Activated T-helper 1 cell treated with anti-CD3 and anti-CD28 coated beads, Interleukin-12 subunit alpha, Interleukin-12 subunit beta, Interleukin-2, Interleukin-4 antibody, amounts not matched to agents 30 ng/mL and 10 ng/mL and 1 ng/mL, durations not matched to agents 14 hours and 24 hours and 36 hours (primary cell): ENCODE measurements at regions of chr1 and their contacts with region 1.

Region 1: DNA sequence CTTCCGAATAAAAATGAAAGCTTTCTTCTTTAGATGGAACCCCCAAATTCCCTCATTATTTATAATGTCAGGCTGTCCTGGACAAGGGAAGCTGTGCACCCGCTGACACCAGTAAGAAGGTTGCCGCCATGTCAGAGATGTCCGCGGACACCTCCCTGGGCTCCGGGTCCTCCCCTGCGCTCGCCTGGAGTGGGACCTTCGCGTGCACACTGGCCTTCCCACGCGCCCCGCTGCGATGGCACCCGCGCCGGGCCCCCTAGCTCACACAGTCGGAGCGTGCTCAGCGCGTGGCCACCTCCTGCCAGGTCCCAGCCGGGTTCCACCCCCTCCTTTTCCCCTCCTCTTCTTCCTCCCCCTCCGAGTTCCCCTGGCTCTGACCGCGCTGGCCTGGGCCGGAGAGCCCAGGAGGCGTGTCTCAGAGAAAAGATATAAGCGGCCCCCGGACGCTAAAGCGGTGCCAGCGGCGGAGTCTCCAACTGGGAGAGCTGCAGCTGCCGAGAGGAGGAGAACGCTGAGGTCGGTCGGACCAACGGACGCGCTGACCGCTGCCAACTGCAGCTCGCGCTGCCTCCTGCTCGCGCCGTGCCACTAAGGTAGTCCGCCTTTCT is at the start of gene G0S2:
- DNase-seq: peak; percentile 59
- H3K4me3 Mint-ChIP-seq: peak within 1 kb of the TSS; percentile 92
- H3K27ac Mint-ChIP-seq: peak within 1 kb of the TSS; percentile 94
- H3K4me1 Mint-ChIP-seq: peaks cover 87% of the 10 kb centered on the region
- H3K27me3 Mint-ChIP-seq: peaks cover 2% of the 10 kb centered on the region
- total RNA-seq, gene G0S2: 501 and 509 TPM in 2 replicates

Region 2: DNA sequence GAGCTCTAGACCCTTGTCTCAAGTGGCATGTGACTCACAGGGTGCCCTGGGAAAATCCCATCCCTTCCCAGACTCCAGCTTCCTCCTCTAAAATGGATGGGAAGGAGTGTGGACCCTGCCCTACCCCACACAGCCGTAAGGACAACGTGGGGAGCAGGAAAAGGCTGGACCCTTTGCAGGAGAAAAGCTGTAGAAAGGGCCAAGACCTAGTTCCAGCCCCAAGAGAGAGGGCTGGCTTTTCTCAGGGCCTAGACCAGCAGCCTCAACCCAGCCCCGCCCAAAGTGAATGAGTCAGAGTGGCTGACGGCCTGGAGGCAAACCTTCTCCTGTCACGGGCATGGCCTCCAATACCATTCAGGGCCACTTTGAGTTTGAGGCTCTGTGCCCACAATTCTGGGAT is 23.9 kb before region 1 on chr1:
- intact Hi-C with region 1: loop called (anchors 1 kb)
- DNase-seq: peak; percentile 70
- H3K4me3 Mint-ChIP-seq: peak overlapping the region; percentile 58
- H3K27ac Mint-ChIP-seq: peak overlapping the region; percentile 96
- H3K4me1 Mint-ChIP-seq: peaks cover 76% of the 10 kb centered on the region
- H3K27me3 Mint-ChIP-seq: no peaks in the 10 kb centered on the region

Region 3: DNA sequence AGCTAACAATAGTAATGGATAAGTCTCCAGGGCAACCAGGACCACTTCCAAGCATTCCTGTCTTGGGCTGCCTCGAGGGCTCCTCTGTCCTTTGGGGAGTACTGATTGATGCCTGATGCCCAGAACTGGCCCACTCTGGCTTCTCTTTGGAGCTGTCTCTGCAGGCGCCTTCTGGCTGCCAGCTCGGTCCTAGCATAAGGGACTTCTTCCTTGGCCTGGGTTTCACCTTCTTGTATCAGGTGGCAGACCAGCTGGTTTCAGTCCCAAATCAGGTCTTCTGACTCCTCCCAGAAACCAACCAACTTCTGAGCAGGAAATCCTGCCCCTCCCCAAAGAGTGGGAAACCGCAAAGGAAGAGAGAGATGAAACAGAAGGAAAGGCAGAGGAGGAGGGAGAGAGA is 10.8 kb after region 1 on chr1:
- intact Hi-C with region 1: loop called (anchors 2 kb)
- DNase-seq: peak; percentile 58
- H3K4me3 Mint-ChIP-seq: peak overlapping the region; percentile 74
- H3K27ac Mint-ChIP-seq: peak overlapping the region; percentile 82
- H3K4me1 Mint-ChIP-seq: peaks cover 45% of the 10 kb centered on the region
- H3K27me3 Mint-ChIP-seq: no peaks in the 10 kb centered on the region

Region 4: DNA sequence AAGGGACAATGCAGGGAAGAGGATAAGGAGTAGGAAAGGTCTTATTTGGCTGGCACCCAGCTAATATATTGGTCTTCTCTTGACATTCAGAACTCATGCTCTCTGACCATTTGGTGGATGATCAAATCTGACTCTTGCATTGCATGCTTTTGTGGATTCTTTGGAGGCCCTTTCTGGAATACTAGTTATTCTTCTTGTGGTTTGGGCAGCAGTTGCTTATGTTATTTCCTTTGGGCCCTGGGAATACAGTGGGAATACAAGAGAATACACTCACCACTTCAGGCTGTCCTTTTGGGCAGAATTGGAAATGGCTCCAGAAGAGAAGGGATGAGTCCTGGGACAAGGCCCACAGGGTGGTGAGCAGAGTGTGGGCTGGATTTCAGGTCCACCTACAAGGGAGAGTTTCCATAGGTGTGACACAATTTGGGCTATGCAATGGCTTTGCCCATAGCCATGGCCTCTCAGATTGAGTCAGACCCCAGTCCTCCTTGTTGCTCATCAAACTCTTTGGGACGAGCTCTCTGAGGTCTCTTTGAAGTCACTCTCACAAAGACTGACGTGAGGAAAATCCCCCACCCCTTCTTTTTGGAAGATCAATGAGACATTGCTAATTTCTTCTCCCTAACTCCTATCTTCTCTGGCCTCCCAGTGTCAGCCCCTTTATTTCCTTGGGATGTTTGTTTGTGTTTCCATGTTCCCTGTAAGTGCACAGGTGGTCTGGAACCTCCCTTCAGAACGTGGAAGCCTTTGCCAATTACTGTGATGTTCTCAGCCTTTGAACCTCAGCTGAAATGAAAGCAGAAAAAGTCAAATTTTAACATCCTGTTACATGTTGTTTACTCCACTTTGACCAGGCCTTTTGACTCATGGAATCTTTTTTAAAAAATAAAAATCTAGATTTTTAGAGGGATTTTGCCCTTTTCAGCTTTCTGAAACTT is 49.0 kb after region 1 on chr1:
- intact Hi-C with region 1: loop called (anchors 1 kb)
- DNase-seq: peak; percentile 37
- H3K4me3 Mint-ChIP-seq: peak overlapping the region; percentile 53
- H3K27ac Mint-ChIP-seq: peak overlapping the region; percentile 100
- H3K4me1 Mint-ChIP-seq: peaks cover 68% of the 10 kb centered on the region
- H3K27me3 Mint-ChIP-seq: no peaks in the 10 kb centered on the region

Region 5: GRCh38 chr1:209755926-209756614 is 81.0 kb after region 1 on chr1 and contains the start of gene TRAF3IP3:
- intact Hi-C with region 1: loop called (anchors 1 kb)
- DNase-seq: peak; percentile 74
- H3K4me3 Mint-ChIP-seq: peak within 1 kb of the TSS; percentile 99
- H3K27ac Mint-ChIP-seq: peak within 1 kb of the TSS; percentile 98
- H3K4me1 Mint-ChIP-seq: peaks cover 80% of the 10 kb centered on the region
- H3K27me3 Mint-ChIP-seq: no peaks in the 10 kb centered on the region
- total RNA-seq, gene TRAF3IP3: 378 and 384 TPM in 2 replicates

Region 6: DNA sequence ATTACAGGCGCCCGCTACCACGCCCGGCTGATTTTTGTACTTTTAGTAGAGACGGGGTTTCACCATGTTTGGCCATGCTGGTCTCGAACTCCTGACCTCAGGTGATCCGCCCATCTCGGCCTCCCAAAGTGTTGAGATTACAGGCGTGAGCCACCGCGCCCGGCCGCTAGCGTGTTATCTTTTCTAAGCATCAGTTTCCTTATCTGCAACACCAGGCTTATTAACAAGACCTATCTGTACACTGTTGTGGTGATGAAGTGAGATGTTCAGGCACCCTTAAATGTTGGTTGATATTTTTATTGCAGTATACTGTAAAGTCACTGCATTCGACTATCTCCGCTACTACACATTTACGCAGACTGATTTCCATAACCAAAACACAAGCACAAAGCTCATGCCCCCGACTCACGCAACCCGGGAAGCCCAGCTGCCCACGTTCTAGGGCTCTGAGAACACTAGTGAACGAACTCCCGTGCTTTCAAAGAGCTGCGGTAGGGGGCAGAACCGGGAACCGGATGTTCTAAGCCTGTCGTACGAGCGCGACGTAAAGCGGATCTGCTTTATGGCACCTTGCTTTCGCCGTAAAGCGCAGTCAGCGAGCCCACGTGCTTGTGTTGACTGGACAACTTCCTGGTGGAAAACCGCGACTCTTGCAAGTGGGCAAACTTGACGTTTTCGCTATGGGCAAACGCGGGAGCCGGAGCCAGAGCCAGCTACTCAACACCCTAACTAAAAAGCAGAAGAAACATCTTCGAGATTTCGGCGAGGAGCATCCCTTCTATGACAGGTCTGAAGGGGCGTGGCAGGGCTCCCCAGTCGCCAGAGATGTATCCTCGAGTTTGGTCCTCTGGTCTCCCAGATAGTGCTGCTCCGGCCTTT is 152.6 kb after region 1 on chr1 and contains the start of gene UTP25:
- intact Hi-C with region 1: loop called (anchors 2 kb)
- DNase-seq: peak; percentile 89
- H3K4me3 Mint-ChIP-seq: peak within 1 kb of the TSS; percentile 93
- H3K27ac Mint-ChIP-seq: peak within 1 kb of the TSS; percentile 90
- H3K4me1 Mint-ChIP-seq: peaks cover 51% of the 10 kb centered on the region
- H3K27me3 Mint-ChIP-seq: peaks cover 9% of the 10 kb centered on the region
- total RNA-seq, gene UTP25: 17.7 and 18.3 TPM in 2 replicates